ENCODE measurements at regions of chr20 and their contacts with region 1.

Region 1: GRCh38 chr20:50070991-50071888 is 41.7 kb downstream of the UBE2V1 start:
- DNase-seq: peak; percentile 95
- ATAC-seq: peak; percentile 99
- H3K4me3 Mint-ChIP-seq: peak overlapping the region; percentile 61
- H3K27ac Mint-ChIP-seq: no peak overlapping the region
- H3K4me1 Mint-ChIP-seq: peaks cover 4% of the 10 kb centered on the region
- H3K27me3 Mint-ChIP-seq: no peaks in the 10 kb centered on the region

Region 2: DNA sequence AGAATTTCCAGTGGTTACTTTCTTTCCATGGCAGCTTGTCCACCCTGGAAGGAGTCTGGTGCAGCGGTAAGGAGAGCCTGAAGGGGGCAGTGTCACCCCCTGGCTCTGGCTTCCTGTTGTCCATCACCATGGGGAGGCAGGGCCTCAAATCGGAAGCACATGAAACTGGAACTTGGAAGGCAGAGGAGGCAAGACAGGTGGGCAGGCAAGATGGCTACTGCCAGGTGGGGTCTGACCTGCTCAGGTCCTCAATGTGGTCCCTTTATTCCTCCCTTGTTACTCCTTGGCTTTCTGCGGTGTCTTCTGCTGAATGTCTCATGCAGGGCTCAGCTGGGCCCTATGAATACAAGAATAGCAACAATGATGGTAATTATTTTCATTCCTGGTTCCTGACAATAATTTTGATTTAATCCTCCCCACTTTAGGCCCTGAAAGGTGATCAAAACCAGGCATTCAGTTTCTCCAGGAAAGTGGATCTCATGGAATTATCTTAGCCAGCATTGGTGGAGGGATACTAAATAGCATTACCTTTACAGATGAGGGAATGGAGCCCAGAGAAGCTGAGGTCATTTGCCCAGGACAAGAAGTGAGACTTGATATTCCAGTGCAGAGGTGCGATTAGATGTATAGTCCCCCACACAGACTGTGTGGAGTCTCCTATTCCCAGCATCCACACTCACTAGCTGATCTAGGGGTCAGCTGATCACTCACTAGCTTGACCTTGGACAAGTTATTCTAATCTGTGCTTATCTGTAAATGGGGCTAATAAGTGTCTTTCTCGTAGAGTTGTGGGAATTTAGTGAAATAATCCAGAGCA is 106.1 kb before region 1 on chr20:
- CTCF ChIA-PET with region 1: interaction called, 34 read pairs
- POLR2A ChIA-PET with region 1: no interaction called
- intact Hi-C with region 1: no loop called
- DNase-seq: peak; percentile 56
- ATAC-seq: peak; percentile 66
- H3K4me3 Mint-ChIP-seq: no peak overlapping the region
- H3K27ac Mint-ChIP-seq: no peak overlapping the region
- H3K4me1 Mint-ChIP-seq: no peaks in the 10 kb centered on the region
- H3K27me3 Mint-ChIP-seq: no peaks in the 10 kb centered on the region

Region 3: GRCh38 chr20:49989234-49990065 is 81.8 kb before region 1 on chr20:
- CTCF ChIA-PET with region 1: interaction called, 10 read pairs
- POLR2A ChIA-PET with region 1: interaction called, 3 read pairs
- intact Hi-C with region 1: no loop called
- DNase-seq: peak; percentile 19
- ATAC-seq: peak; percentile 44
- H3K4me3 Mint-ChIP-seq: no peak overlapping the region
- H3K27ac Mint-ChIP-seq: no peak overlapping the region
- H3K4me1 Mint-ChIP-seq: no peaks in the 10 kb centered on the region
- H3K27me3 Mint-ChIP-seq: no peaks in the 10 kb centered on the region

Region 4: DNA sequence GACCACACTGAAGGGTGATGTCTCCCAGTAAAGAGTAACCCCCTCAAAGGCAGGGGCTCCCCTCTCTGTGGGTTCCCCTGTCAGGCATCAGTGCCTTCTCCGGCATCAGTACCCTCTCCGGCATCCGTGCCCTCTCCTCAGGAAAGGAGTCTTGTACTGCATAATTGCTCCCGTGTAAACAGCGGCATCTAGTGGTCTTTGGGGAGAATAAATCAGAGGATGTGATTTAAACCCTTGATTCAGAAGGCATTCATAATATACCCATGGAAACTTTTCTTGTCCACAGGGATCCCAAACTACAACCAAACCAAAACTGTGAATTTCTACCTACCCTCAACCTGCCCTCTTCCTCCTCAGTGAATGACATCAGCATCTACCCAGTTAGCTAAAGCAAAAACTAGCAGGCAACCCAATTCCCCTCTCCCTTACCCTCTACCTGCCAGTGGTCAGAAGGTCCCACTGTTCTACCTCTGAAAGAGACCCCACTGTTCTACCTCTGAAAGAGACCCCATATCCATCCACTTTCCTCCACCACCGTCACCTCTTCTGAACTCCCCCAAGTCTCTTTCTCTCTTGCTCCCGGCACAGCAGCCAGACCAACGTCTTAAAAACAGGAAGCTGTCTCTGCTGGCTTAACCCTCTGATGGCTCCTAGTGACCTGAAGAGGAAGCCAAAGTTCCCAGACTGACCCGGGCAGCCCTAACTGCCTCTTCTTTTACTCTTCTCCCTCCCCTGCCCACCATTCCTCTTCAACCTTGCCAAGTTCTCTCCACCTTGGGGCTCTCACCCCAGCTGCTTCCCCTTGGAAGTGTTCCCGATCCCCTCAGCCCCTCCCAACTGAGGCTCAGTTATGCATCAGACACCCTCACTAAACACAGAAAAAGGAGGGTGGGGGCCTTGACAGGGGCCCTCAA is 14.5 kb after region 1 on chr20:
- CTCF ChIA-PET with region 1: interaction called, 56 read pairs
- POLR2A ChIA-PET with region 1: no interaction called
- intact Hi-C with region 1: no loop called
- DNase-seq: peak; percentile 58
- ATAC-seq: peak; percentile 92
- H3K4me3 Mint-ChIP-seq: peak overlapping the region; percentile 1
- H3K27ac Mint-ChIP-seq: peak overlapping the region; percentile 51
- H3K4me1 Mint-ChIP-seq: peaks cover 33% of the 10 kb centered on the region
- H3K27me3 Mint-ChIP-seq: no peaks in the 10 kb centered on the region

Measured in activated CD4-positive, alpha-beta T cell treated with anti-CD3 and anti-CD28 coated beads for 36 hours (primary cell).